ENCODE measurements at regions of chr22 and their contacts with region 1.

Region 1: DNA sequence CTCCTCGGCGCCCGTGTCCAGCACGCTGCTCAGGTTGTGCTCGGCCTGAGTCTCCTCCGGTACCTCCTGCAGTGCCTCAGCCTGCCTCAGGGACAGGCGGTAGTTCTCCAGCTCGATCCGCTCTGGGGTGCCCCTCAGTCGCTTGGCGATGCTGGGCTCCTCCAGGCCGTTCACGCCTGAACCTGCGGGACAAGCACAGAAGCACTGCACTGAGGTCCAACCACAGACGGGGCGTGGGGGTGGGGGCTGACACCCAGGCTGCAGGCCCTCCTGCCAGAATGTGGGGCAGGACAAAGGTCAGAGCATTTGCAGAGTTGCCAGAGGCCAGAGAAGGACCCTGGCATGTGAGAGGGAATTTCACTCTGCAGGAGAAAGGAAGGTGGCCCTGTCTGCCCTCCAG is 67.6 kb upstream of the BID start:
- DNase-seq: no peak

Region 2: DNA sequence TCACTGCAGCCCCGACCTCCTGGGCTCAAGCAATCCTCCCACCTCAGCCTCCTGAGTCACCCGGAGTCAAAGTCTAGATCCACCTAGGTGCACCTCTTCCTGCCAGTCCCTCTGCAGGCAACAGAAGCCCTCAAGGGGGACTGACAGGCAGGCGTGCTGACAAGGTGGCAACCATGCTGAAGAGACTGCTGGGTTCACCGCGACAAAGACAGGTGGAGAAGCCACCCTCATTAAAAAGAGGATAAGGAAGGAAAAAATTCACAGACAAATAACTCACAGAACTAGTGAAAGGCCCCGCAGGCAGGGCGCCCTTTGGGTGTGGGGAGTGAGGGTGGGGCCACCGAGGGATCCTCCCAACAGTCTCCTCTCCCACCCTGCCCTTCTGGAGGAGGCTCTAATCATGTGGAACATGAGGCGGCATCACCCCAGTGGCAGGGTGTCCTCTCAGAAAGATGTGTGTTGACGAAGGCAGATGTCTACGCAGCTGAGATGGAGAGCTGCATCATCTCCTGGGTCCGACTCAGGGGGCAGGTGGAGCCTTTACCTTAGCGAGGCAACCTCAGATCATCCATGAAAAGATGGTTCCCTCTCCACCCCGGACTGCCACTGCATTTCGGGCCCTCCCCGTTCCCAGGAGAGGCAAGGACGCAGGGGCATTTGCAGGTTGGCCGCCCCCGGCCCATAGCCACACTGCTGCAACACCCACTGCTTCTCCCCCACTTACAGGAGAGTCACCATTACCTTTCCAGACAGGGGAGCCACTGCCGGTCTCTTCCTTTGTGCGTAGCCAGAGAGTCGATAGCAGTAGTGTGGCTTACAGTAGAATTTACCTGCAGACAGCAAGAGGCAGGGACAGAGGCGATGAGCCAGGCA is 23.6 kb after region 1 on chr22:
- intact Hi-C with region 1: loop called in 1 of 2 experiments (anchors 1 kb)
- DNase-seq: no peak